Heart right ventricle (tissue), 16 donors: ENCODE measurements at regions of chr12 and their contacts with region 1.

Region 1: DNA sequence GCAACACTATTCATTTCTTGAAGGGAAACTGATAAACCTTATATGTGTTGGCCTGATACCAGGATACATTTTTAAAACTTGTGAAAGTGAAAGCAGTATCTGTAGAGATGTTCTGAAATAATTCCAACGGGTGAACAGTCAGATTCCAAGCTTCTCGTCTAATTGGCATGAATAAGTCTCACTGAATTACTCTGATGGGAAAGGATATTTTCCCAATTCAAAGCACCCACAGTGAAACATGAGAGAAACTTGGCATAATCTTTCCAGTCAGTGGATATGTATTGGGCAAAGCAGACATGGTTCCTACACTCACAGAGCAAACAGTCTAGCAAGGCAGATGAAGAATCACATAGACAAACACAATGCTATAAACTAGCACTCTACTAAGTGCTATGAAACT is 413.1 kb downstream of the MED13L start:
- DNase-seq: no peak
- ATAC-seq: no peak
- H3K4me3 ChIP-seq: no peak overlapping the region
- H3K27ac ChIP-seq: no peak overlapping the region
- H3K4me1 ChIP-seq: peaks cover 0 to 5% (median 0%) of the 10 kb centered on the region in 9 donors
- H3K27me3 ChIP-seq: peaks cover 0 to 6% (median 0%) of the 10 kb centered on the region in 7 donors
- CTCF ChIP-seq: no peak

Region 2: DNA sequence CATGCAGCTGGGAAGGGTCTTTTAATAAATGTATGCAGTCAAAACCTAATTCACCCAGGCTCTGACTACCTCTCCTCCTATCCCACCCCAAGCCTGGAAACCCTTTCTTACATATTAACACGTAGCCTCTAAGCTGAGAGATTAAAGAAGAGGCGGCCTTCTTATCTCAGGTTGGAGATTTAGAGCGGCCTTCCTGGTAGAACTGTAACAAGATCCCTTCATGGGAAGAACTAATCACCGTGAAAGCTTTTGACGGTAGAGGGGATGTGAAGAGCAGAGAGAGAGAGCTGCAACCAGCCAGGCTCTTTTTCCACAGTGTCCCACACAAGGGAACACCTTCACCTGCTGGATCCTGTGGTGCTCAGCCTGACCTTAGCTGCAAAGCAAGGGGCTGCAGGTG is 45.7 kb after region 1 on chr12:
- intact Hi-C with region 1: loop called in 1 of 10 experiments (anchors 2 kb)
- DNase-seq: no peak
- ATAC-seq: no peak
- H3K4me3 ChIP-seq: no peak overlapping the region
- H3K27ac ChIP-seq: no peak overlapping the region
- H3K4me1 ChIP-seq: no peaks in the 10 kb centered on the region
- H3K27me3 ChIP-seq: peaks cover 0 to 22% (median 0%) of the 10 kb centered on the region in 7 donors
- CTCF ChIP-seq: no peak